ENCODE measurements at regions of chr20 and their contacts with region 1.

Region 1: DNA sequence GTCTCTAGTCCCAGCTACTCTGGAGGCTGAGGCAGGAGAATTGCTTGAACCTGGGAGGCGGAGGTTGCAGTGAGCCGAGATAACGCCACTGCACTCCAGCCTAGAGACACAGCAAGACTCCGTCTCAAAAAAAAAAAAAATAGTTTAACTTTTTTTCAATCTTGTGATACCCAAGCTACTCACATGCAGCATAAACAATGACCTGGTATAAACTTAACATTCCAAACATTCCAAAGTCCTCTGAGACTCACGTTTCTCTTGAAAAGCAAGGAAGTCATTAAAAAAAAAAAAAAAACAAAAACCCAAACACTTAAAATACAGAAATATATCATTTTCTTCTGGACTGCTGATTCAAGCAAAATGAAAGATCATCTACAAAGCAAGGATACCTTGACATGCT is 14.3 kb downstream of the CRNKL1 start:
- DNase-seq: peak; percentile 82
- H3K4me3 ChIP-seq: no peak overlapping the region
- H3K27ac ChIP-seq: peak overlapping the region; percentile 25
- H3K4me1 ChIP-seq: peaks cover 19% of the 10 kb centered on the region
- H3K27me3 ChIP-seq: no peaks in the 10 kb centered on the region
- CTCF ChIP-seq: no peak
- POLR2A ChIP-seq: no peak

Region 2: DNA sequence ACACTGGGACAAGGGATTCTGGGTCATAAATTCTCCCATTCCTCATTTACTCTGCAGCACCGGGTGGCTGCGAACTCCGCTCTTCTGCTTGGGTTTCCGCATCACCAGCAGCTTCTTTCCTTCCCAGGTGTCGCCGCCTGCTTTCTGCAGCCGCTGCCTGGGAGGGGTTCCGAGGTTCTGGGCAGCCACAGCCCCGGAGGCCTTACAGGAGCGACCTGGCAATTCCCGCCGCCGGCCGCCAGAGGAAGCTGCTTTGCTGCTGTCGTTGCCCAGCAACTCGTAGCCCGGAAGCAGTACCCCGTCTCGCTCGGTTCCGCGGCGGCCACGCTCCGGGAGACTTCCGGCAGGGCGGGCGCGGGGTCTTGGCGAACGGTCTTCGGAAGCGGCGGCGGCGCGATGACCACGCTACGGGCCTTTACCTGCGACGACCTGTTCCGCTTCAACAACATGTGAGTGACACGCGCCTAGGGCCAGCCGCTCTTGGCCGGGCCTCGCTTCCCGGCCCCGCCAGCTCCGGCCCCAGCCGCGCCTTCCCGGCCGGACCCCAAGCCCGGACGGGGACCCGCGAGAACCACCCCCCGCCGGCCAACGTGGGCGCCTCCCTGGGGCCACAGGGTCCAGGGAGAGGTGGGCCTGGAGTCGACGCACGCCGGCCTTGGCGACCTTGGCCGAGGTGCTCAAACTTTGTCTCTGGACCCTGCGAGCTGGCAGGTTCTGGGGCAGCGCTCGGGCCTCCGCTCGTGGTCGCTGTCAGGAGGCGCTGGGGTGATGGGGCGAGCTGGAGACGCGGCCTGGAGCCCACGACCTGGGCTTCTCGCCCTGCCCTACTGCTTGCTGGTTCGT is 20.7 kb before region 1 on chr20 and contains the start of gene NAA20:
- CTCF ChIA-PET with region 1: interaction called, 4 read pairs
- POLR2A ChIA-PET with region 1: no interaction called
- dilution Hi-C with region 1: no loop called
- intact Hi-C with region 1: loop called (anchors 1 kb)
- DNase-seq: peak; percentile 92
- H3K4me3 ChIP-seq: peak within 1 kb of the TSS; percentile 55 to 60 (median 57)
- H3K27ac ChIP-seq: peak within 1 kb of the TSS; percentile 60
- H3K4me1 ChIP-seq: peaks cover 13% of the 10 kb centered on the region
- H3K27me3 ChIP-seq: no peaks in the 10 kb centered on the region
- CTCF ChIP-seq: peak; percentile 47 to 87
- POLR2A ChIP-seq: no peak
- total RNA-seq, gene NAA20: 73.4 and 77.3 TPM in 2 replicates

Region 3: GRCh38 chr20:20292472-20292871 is 254.5 kb after region 1 on chr20:
- CTCF ChIA-PET with region 1: no interaction called
- POLR2A ChIA-PET with region 1: no interaction called
- dilution Hi-C with region 1: no loop called
- intact Hi-C with region 1: no loop called
- DNase-seq: no peak
- H3K4me3 ChIP-seq: no peak overlapping the region
- H3K27ac ChIP-seq: no peak overlapping the region
- H3K4me1 ChIP-seq: no peaks in the 10 kb centered on the region
- H3K27me3 ChIP-seq: no peaks in the 10 kb centered on the region
- CTCF ChIP-seq: no peak
- POLR2A ChIP-seq: no peak

Measured in endothelial cell of umbilical vein (primary cell).